PC-9 (cell line): ENCODE measurements at regions of chr21 and their contacts with region 1.

Region 1: GRCh38 chr21:14877570-14878228 is 187.1 kb downstream of the NRIP1 start:
- DNase-seq: peak in 1 of 2 experiments; percentile 93
- H3K4me3 ChIP-seq: peak overlapping the region; percentile 19; the same call in 1 of the 2 replicates
- H3K27ac ChIP-seq: peak overlapping the region; percentile 87
- H3K4me1 ChIP-seq: peaks cover 89% of the 10 kb centered on the region
- H3K27me3 ChIP-seq: no peaks in the 10 kb centered on the region
- CTCF ChIP-seq: no peak

Region 2: DNA sequence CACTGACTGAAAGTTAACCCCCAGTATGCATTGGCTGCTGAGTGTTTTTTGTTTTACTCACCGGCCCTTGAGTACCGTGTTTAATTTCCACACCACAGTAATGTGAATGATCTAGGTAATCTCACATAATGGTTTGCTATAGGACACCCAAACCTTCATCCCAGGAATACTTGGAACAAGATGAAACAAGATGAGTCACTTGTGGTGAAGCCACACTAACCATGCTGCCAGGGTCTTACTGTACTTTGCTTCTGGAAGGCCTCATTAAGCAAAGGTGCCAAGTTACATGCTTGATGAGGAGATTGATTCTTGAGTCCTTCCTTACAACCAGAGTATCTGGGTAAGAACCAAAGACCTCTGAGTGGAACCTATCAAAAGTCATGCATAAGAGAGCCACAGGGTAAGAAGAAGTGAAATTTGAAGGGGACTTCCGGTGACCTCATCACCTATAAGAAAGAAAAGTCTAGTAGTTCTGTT is 23.8 kb after region 1 on chr21:
- CTCF ChIA-PET with region 1: no interaction called
- POLR2A ChIA-PET with region 1: no interaction called
- intact Hi-C with region 1: loop called (anchors 1 kb)
- DNase-seq: peak; percentile 25 to 82
- H3K4me3 ChIP-seq: no peak overlapping the region
- H3K27ac ChIP-seq: peak overlapping the region; percentile 34
- H3K4me1 ChIP-seq: peaks cover 25% of the 10 kb centered on the region
- H3K27me3 ChIP-seq: no peaks in the 10 kb centered on the region
- CTCF ChIP-seq: no peak

Region 3: GRCh38 chr21:14911351-14911750 is 33.7 kb after region 1 on chr21:
- CTCF ChIA-PET with region 1: interaction called, 4 read pairs
- POLR2A ChIA-PET with region 1: no interaction called
- intact Hi-C with region 1: loop called (anchors 1 kb)
- DNase-seq: peak; percentile 81 to 90
- H3K4me3 ChIP-seq: no peak overlapping the region
- H3K27ac ChIP-seq: peak overlapping the region; percentile 72
- H3K4me1 ChIP-seq: peaks cover 50% of the 10 kb centered on the region
- H3K27me3 ChIP-seq: no peaks in the 10 kb centered on the region
- CTCF ChIP-seq: no peak